ENCODE measurements at regions of chr16 and their contacts with region 1.

Region 1: DNA sequence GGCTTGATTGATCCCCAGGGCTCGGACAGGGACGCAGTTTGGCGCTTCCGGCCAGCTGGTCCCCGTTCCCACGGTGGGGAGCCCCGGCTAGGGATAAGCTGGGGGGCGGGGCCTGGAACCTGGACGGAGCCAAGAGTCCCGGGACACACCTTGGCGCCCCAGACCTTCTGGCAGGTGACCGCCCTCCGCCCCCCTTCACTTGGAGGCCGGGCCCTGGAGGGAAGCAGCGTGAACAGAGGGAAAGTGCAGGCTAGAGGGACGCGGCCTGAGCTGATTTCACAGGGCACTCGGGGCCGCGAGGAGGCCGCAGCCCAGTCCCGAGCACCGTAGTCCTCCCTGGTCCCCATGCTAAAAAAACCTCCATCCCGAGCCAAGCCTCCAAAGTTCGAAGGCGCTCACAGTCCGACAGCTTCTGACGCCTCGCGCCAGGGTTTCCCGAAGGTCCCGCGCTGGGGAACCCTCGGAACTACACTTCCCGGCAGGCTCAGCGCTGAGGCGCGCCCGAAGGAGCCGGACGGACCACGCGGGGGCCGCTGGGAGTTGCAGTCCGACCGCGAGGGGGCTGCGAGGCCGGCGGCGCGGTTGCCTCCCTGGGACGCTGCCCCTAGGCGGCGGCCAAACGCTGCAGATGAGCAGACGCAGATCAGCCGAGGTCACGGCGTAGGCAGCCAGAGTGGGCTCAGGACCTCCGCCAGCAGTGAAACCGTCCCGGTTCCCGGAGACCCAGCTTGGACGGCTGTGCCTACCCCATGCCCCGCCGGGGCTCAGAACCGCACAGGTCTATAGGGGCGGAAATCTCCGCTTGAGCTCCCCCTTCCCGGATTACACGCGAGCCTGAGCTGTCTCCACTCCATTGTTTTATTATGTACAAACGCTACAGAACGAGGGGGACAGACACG is at the start of gene TBX6:
- DNase-seq: peak; percentile 98
- H3K4me3 Mint-ChIP-seq: peak within 1 kb of the TSS; percentile 87
- H3K27ac Mint-ChIP-seq: peak within 1 kb of the TSS; percentile 93
- H3K4me1 Mint-ChIP-seq: peaks cover 40% of the 10 kb centered on the region
- H3K27me3 Mint-ChIP-seq: no peaks in the 10 kb centered on the region
- total RNA-seq, gene TBX6: 2.1 TPM in 2 replicates

Region 2: GRCh38 chr16:29757950-29758466 is 333.7 kb before region 1 on chr16:
- intact Hi-C with region 1: no loop called
- DNase-seq: no peak
- H3K4me3 Mint-ChIP-seq: no peak overlapping the region
- H3K27ac Mint-ChIP-seq: no peak overlapping the region
- H3K4me1 Mint-ChIP-seq: peaks cover 15% of the 10 kb centered on the region
- H3K27me3 Mint-ChIP-seq: no peaks in the 10 kb centered on the region

Region 3: DNA sequence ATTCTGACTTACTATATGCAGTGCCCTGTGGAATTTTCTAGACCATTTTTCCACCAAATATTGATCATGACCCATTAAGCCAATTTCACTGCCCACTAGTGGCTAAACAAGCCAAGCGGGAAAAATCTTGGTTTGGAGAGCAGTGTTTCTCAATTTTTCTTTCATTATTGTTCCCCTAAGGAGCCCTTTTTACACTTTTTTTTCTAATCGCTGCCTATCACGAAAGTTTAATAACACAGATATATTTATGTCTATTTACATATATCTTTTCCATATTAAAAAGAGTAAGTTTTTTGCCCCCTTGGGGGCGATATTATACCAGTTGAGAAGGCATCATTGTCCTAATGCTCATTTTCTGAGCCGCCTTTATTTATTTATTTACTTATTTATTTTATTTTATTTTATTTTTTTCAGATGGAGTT is 49.9 kb before region 1 on chr16:
- intact Hi-C with region 1: no loop called
- DNase-seq: no peak
- H3K4me3 Mint-ChIP-seq: no peak overlapping the region
- H3K27ac Mint-ChIP-seq: no peak overlapping the region
- H3K4me1 Mint-ChIP-seq: peaks cover 4% of the 10 kb centered on the region
- H3K27me3 Mint-ChIP-seq: peaks cover 19% of the 10 kb centered on the region

Region 4: DNA sequence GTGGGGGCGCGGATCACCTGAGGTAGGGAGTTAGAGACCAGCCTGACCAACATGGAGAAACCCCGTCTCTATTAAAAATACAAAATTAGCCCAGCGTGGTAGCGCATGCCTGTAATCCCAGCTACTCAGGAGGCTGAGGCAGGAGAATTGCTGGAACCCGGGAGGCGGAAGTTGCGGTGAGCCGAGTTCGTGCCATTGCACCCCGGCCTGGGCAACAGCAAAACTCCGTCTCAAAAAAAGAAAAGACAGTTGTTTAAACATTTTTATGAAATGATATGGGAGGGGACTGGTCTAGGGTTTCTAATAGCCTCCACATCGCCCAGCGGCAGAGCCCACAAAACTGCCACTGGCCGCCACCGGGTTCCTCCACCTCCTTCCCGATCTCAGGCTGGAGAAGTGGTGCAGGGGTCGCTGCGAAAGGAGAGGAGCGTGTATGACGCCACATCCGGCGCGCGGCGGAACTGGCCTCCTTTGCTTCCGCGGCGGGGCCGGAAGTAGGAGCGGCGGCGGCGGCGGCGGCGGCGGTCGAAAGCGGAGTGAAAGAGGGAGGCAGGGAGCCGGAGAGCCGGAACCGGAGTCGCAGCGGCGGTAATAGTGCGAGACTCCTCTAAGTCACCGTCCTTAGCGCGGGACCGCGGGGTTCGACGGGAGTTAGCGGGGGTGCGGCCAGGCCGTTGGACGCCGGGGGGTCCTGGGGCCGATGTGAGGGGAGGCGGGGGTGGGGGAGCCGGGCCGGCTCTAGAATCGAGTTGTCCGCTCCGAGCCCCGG is 16.0 kb before region 1 on chr16 and contains the start of gene PPP4C:
- intact Hi-C with region 1: loop called (anchors 1 kb)
- DNase-seq: peak; percentile 98
- H3K4me3 Mint-ChIP-seq: peak within 1 kb of the TSS; percentile 91
- H3K27ac Mint-ChIP-seq: peak within 1 kb of the TSS; percentile 89
- H3K4me1 Mint-ChIP-seq: peaks cover 28% of the 10 kb centered on the region
- H3K27me3 Mint-ChIP-seq: no peaks in the 10 kb centered on the region
- total RNA-seq, gene PPP4C: 144 and 145 TPM in 2 replicates

Region 5: DNA sequence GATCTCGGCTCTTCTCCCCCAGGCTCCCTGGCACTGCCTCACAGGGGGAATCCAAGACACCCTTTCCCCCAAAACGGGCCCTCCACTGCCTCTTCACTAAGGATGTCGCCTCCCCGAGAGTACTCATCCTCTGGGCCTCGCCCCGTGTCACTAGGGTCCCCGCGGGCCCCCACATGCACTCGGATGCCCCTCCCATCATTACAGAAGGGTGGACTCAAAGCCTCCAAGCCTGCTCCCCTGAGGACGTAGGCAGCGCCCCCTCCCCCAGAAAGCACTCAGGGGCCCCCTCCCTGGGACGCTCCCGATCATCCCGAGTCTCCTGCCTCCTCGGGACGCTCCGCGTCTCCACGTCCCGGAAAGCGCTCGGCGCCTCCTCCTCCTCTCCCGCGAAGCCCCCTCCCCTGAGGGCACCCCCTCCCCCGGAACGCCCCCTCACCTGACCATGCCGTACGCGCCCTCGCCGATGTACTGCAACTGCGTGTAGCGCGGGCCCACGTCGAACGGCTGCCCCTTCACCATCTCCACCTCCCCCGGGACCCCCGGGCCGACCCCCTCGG is 31.0 kb after region 1 on chr16:
- intact Hi-C with region 1: loop called (anchors 1 kb)
- DNase-seq: no peak
- H3K4me3 Mint-ChIP-seq: peak overlapping the region; percentile 91
- H3K27ac Mint-ChIP-seq: peak overlapping the region; percentile 91
- H3K4me1 Mint-ChIP-seq: peaks cover 23% of the 10 kb centered on the region
- H3K27me3 Mint-ChIP-seq: no peaks in the 10 kb centered on the region

Region 6: GRCh38 chr16:31202414-31203375 is 1111.0 kb after region 1 on chr16 and contains the start of gene PYCARD:
- intact Hi-C with region 1: no loop called
- DNase-seq: peak; percentile 86
- H3K4me3 Mint-ChIP-seq: peak within 1 kb of the TSS; percentile 89
- H3K27ac Mint-ChIP-seq: peak within 1 kb of the TSS; percentile 87
- H3K4me1 Mint-ChIP-seq: peaks cover 54% of the 10 kb centered on the region
- H3K27me3 Mint-ChIP-seq: peaks cover 1% of the 10 kb centered on the region
- total RNA-seq, gene PYCARD: 15.6 and 17.1 TPM in 2 replicates